Mucosa of descending colon (tissue), 3 donors: ENCODE measurements at regions of chr4 and their contacts with region 1.

Region 1: GRCh38 chr4:168710353-168710946 is 213.6 kb downstream of the PALLD start:
- DNase-seq: peak in 1 of 3 donors; percentile 72
- ATAC-seq: no peak
- H3K4me3 ChIP-seq: no peak overlapping the region
- H3K4me1 ChIP-seq: no peaks in the 10 kb centered on the region
- CTCF ChIP-seq: no peak

Region 2: DNA sequence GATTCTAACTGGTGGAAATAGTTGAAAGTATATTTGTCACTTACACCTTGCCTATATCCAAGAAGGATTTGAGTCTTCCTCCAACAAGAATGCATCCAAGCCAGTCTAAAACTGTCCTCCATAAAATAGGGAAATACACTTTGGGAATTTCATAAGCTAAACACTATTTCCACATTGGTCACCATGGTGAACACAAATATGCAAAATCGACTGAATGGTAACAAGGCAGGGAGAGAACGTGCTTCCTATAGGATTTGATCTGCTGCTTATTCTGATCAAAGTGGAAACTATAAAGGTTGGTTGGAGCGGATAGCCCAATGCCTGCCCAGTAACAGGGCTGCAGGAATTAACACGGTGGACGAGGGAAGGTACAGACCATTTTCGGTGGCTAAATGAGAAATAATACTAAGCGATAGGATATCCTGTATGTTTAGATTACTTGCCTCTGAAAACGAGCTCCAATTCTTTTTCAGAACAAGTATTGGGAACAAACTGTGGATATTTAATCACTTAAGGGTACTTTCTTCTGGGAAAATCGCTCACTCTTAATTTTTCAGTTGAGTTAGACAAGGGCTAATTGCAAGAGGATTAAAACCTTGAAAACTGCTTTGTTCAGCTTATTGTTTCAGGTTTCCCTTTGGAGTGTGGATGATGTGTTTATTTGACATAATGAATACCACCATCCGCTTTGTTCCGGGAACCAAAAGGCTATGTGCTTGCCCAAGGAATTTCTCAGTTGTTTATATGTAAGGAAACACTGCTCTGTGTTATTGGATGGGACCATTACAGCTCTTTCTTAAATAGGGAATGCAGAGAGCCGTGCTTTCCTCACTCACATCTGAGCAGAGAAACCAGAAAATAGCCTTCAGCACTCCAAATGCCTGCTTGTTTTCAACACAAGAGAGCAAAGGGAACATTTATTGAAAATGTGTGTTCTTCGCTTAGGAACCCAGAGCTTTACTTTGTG is 105.2 kb after region 1 on chr4:
- intact Hi-C with region 1: loop called in 1 of 2 experiments (anchors 10 kb)
- DNase-seq: no peak
- ATAC-seq: no peak
- H3K4me3 ChIP-seq: no peak overlapping the region
- H3K4me1 ChIP-seq: peaks cover 6% of the 10 kb centered on the region
- CTCF ChIP-seq: no peak

Region 3: GRCh38 chr4:168917138-168917779 is 206.8 kb after region 1 on chr4:
- intact Hi-C with region 1: loop called (anchors 10 kb)
- DNase-seq: peak in 1 of 3 donors; percentile 48
- ATAC-seq: no peak
- H3K4me3 ChIP-seq: no peak overlapping the region
- H3K4me1 ChIP-seq: no peaks in the 10 kb centered on the region
- CTCF ChIP-seq: peak; percentile 27

Region 4: GRCh38 chr4:169045862-169046584 is 335.6 kb after region 1 on chr4:
- intact Hi-C with region 1: no loop called
- DNase-seq: no peak
- ATAC-seq: no peak
- H3K4me3 ChIP-seq: no peak overlapping the region
- H3K4me1 ChIP-seq: no peaks in the 10 kb centered on the region
- CTCF ChIP-seq: no peak